HEK293 (cell line): ENCODE measurements at regions of chr9 and their contacts with region 1.

Region 1: GRCh38 chr9:93134015-93134739 is at the start of gene NINJ1:
- H3K4me3 ChIP-seq: peak within 1 kb of the TSS; percentile 80
- H3K27ac ChIP-seq: peak within 1 kb of the TSS; percentile 76; the same call in 1 of the 2 replicates
- H3K4me1 ChIP-seq: 0 out of 2 replicates have a peak, but pooled peaks cover 2% of the 10 kb centered on the region
- CTCF ChIP-seq: peak; percentile 10; the same call in 1 of the 2 replicates

Region 2: GRCh38 chr9:93028448-93029006 is 105.7 kb before region 1 on chr9:
- CTCF ChIA-PET with region 1: no interaction called
- POLR2A ChIA-PET with region 1: no interaction called
- H3K4me3 ChIP-seq: no peak overlapping the region
- H3K27ac ChIP-seq: no peak overlapping the region
- H3K4me1 ChIP-seq: no peaks in the 10 kb centered on the region
- CTCF ChIP-seq: no peak

Region 3: GRCh38 chr9:93095205-93096130 is 38.7 kb before region 1 on chr9:
- CTCF ChIA-PET with region 1: no interaction called
- POLR2A ChIA-PET with region 1: interaction called, 15 read pairs
- H3K4me3 ChIP-seq: peak overlapping the region; percentile 44
- H3K27ac ChIP-seq: peak overlapping the region; percentile 63
- H3K4me1 ChIP-seq: peaks cover 2% of the 10 kb centered on the region; the same call in 1 of the 2 replicates
- CTCF ChIP-seq: no peak

Region 4: GRCh38 chr9:93119953-93120845 is 14.0 kb before region 1 on chr9:
- CTCF ChIA-PET with region 1: interaction called, 15 read pairs
- POLR2A ChIA-PET with region 1: interaction called, 23 read pairs
- H3K4me3 ChIP-seq: no peak overlapping the region
- H3K27ac ChIP-seq: no peak overlapping the region
- H3K4me1 ChIP-seq: peaks cover 3% of the 10 kb centered on the region; the same call in 1 of the 2 replicates
- CTCF ChIP-seq: peak; percentile 68

Region 5: GRCh38 chr9:93154315-93154903 is 20.2 kb after region 1 on chr9:
- CTCF ChIA-PET with region 1: interaction called, 30 read pairs
- POLR2A ChIA-PET with region 1: interaction called, 4 read pairs
- H3K4me3 ChIP-seq: no peak overlapping the region
- H3K27ac ChIP-seq: no peak overlapping the region
- H3K4me1 ChIP-seq: no peaks in the 10 kb centered on the region
- CTCF ChIP-seq: peak; percentile 36; the same call in 1 of the 2 replicates

Region 6: DNA sequence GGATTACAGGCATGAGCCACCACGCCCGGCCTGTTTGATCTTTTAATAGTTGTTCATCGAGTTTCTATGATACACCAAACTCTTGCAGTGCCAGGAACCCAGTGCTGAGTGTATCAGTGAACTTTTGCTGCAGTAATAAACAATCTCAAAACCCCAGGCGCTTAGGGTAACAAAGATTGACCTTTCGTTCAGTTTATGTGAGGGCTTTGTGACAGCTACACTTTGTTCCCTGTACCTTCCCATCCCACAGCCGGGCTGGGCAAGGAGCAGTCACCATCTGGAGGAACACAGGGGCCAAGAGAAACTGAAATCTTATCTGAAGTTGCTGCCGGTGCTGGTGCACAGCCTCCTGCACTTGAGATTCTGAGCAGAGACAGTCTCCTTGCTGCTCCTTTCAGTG is 32.5 kb after region 1 on chr9:
- CTCF ChIA-PET with region 1: no interaction called
- POLR2A ChIA-PET with region 1: no interaction called
- H3K4me3 ChIP-seq: no peak overlapping the region
- H3K27ac ChIP-seq: no peak overlapping the region
- H3K4me1 ChIP-seq: no peaks in the 10 kb centered on the region
- CTCF ChIP-seq: no peak

Region 7: GRCh38 chr9:93276968-93277367 is 142.8 kb after region 1 on chr9:
- CTCF ChIA-PET with region 1: no interaction called
- POLR2A ChIA-PET with region 1: no interaction called
- H3K4me3 ChIP-seq: no peak overlapping the region
- H3K27ac ChIP-seq: no peak overlapping the region
- H3K4me1 ChIP-seq: no peaks in the 10 kb centered on the region
- CTCF ChIP-seq: no peak

Region 8: DNA sequence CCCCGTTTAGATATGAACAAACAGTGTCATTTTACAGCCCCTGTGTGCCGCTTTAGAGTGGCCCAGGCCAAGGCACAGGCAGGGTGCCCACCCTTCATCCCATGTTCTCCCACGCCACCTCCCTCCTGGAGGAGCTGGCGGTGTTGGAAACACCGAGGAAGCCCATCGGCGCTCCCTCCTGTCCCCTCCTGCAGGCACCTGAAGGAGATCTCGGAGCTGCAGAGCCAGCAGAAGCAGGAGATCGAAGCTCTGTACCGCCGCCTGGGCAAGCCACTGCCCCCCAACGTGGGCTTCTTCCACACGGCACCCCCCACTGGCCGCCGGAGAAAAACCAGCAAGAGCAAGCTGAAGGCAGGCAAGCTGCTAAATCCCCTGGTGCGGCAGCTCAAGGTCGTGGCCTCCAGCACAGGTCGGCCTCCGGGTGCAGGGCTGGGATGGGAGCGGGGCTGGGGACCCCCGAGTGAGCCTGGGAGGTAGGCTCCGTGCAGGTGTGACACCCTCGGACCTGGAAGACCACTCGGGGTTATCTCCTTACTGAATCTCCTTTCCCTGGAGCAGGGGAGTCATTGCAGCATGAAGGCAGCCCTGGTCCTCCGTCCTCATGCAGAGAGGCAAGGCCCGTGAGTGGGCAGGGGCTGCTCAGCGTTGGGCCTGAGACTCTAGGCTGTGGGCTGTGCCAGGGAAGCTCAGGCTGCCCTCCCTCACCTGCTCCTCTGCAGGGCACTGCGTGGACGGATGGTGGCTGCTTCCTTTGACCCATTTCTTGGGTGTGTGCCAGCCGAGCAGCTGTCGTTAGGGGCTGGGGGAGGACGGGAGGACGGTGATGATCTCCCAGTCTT is 163.7 kb after region 1 on chr9:
- CTCF ChIA-PET with region 1: no interaction called
- POLR2A ChIA-PET with region 1: no interaction called
- H3K4me3 ChIP-seq: no peak overlapping the region
- H3K27ac ChIP-seq: no peak overlapping the region
- H3K4me1 ChIP-seq: no peaks in the 10 kb centered on the region
- CTCF ChIP-seq: no peak